ENCODE measurements at regions of chr13 and their contacts with region 1.

Region 1: GRCh38 chr13:58598241-58598640 is 966.7 kb downstream of the PCDH17 start:
- DNase-seq: no peak
- ATAC-seq: no peak
- H3K4me3 Mint-ChIP-seq: no peak overlapping the region
- H3K27ac Mint-ChIP-seq: no peak overlapping the region
- H3K4me1 Mint-ChIP-seq: no peaks in the 10 kb centered on the region
- H3K27me3 Mint-ChIP-seq: no peaks in the 10 kb centered on the region
- CTCF ChIP-seq: no peak

Region 2: GRCh38 chr13:57629821-57630235 is 968.4 kb before region 1 on chr13:
- CTCF ChIA-PET with region 1: no interaction called
- POLR2A ChIA-PET with region 1: no interaction called
- intact Hi-C with region 1: loop called (anchors 10 kb)
- DNase-seq: peak; percentile 27
- ATAC-seq: peak; percentile 63
- H3K4me3 Mint-ChIP-seq: peak overlapping the region; percentile 25
- H3K27ac Mint-ChIP-seq: no peak overlapping the region
- H3K4me1 Mint-ChIP-seq: peaks cover 36% of the 10 kb centered on the region
- H3K27me3 Mint-ChIP-seq: peaks cover 68% of the 10 kb centered on the region
- CTCF ChIP-seq: no peak

Region 3: DNA sequence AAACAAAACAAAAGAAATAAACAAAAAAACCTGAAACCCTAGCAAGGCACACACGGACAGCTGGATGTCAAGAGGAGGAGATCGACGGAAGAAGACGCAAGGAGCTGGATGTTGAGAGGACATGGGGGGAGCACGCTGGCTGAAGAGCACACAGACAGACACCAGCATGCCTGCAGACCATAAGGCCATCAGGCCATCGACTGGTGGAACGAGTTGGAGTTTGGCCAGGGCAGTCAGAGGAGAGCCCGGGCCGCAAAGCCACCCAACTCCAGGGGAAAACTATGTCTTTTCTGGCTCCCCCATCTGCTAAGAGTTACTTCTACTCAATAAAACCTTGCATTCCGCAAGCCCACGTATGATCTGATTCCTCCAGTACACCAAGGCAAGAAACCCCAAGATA is 12.9 kb after region 1 on chr13:
- CTCF ChIA-PET with region 1: no interaction called
- POLR2A ChIA-PET with region 1: no interaction called
- intact Hi-C with region 1: no loop called
- DNase-seq: no peak
- ATAC-seq: no peak
- H3K4me3 Mint-ChIP-seq: no peak overlapping the region
- H3K27ac Mint-ChIP-seq: no peak overlapping the region
- H3K4me1 Mint-ChIP-seq: no peaks in the 10 kb centered on the region
- H3K27me3 Mint-ChIP-seq: no peaks in the 10 kb centered on the region
- CTCF ChIP-seq: no peak

Region 4: GRCh38 chr13:58660826-58661225 is 62.6 kb after region 1 on chr13:
- CTCF ChIA-PET with region 1: no interaction called
- POLR2A ChIA-PET with region 1: no interaction called
- intact Hi-C with region 1: no loop called
- DNase-seq: no peak
- ATAC-seq: no peak
- H3K4me3 Mint-ChIP-seq: no peak overlapping the region
- H3K27ac Mint-ChIP-seq: no peak overlapping the region
- H3K4me1 Mint-ChIP-seq: no peaks in the 10 kb centered on the region
- H3K27me3 Mint-ChIP-seq: no peaks in the 10 kb centered on the region
- CTCF ChIP-seq: no peak

Measured in activated CD8-positive, alpha-beta T cell treated with anti-CD3 and anti-CD28 coated beads for 36 hours (primary cell).